ENCODE measurements at regions of chr11 and their contacts with region 1.

Region 1: DNA sequence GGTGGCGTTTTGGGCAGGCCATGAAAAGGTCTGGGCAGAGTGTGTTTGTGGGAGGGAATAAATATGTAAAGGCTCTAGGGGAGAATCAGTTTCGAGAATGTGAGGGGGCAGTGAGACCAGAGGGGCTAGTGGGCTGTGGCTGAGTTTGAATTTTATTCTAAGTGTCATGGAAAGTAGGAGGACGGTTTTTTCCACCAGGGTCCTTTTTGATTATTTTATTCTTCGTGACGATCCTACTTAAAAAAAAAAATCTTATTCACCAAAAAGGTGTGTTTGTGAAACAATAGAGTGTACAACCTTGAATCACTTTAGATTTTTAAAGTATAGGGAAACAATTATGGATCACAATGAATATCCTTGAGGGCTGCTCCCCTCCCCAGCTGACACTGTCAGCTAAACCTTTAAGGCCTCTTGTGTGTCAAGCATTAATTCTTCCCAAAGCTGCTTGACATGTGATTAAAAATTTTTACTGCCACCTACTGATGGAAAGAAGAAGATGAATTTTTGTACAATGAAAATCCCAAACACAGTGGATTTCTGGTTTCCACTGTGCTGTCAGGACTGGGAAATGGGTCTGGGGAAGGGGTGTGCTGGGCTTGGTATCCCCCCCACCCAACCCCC is 107.5 kb upstream of the OR4B1 start:
- DNase-seq: no peak
- H3K4me3 ChIP-seq: peak overlapping the region in 56 of 59 donors; percentile 13 to 69 (median 48)
- H3K27ac ChIP-seq: peak overlapping the region in 58 of 59 donors; percentile 11 to 99 (median 80)
- H3K27me3 ChIP-seq: no peaks in the 10 kb centered on the region
- CTCF ChIP-seq: peak in 53 of 56 donors; percentile 29 to 69 (median 57)

Region 2: GRCh38 chr11:47477323-47477722 is 631.8 kb before region 1 on chr11:
- intact Hi-C with region 1: no loop called
- DNase-seq: no peak
- H3K4me3 ChIP-seq: no peak overlapping the region
- H3K27ac ChIP-seq: peak overlapping the region in 57 of 59 donors; percentile 17 to 87 (median 66)
- H3K27me3 ChIP-seq: no peaks in the 10 kb centered on the region
- CTCF ChIP-seq: no peak

Region 3: DNA sequence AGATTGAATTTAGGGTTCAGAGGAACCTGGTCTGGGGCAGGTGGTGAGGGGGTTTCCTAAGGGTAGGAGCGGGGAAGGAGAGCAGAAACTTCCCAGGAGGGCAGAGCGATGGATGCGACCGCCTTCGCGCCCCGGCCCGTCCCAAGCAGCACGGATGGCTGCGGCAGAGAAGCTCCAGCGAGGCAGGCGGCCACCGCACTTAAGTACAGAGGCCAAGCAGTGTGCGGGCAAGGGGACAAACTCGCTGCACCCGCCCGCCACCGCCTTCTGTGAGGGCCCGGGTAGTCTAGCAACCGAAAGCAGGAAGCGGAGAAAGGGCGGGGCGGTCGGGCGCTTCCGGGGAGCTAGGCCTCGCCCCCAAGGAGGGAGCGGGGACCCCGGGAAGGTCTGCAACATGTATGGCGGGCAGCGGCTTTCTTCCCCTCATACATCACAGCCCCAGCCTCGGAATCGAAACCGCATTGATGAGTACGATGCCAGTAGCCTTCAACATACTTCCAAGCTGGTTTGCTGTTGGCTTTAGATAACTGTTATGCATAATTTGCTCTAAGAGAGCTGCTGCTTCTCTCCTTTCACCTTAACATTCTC is 394.0 kb before region 1 on chr11 and contains the start of gene AGBL2:
- intact Hi-C with region 1: no loop called
- DNase-seq: peak; percentile 39 to 77 (median 56)
- H3K4me3 ChIP-seq: peak within 1 kb of the TSS; percentile 49 to 89 (median 76)
- H3K27ac ChIP-seq: peak within 1 kb of the TSS in 49 of 59 donors; percentile 10 to 86 (median 69)
- H3K27me3 ChIP-seq: no peaks in the 10 kb centered on the region
- CTCF ChIP-seq: peak in 1 of 56 donors; percentile 19
- total RNA-seq, gene AGBL2: 0.17 to 3.9 (median 1.2) TPM in 110 of 120 experiments, not detected in the others

Region 4: GRCh38 chr11:47938791-47939560 is 170.2 kb before region 1 on chr11:
- intact Hi-C with region 1: loop called (anchors 1 to 5 kb)
- DNase-seq: no peak
- H3K4me3 ChIP-seq: no peak overlapping the region
- H3K27ac ChIP-seq: no peak overlapping the region
- H3K27me3 ChIP-seq: no peaks in the 10 kb centered on the region
- CTCF ChIP-seq: no peak

Region 5: DNA sequence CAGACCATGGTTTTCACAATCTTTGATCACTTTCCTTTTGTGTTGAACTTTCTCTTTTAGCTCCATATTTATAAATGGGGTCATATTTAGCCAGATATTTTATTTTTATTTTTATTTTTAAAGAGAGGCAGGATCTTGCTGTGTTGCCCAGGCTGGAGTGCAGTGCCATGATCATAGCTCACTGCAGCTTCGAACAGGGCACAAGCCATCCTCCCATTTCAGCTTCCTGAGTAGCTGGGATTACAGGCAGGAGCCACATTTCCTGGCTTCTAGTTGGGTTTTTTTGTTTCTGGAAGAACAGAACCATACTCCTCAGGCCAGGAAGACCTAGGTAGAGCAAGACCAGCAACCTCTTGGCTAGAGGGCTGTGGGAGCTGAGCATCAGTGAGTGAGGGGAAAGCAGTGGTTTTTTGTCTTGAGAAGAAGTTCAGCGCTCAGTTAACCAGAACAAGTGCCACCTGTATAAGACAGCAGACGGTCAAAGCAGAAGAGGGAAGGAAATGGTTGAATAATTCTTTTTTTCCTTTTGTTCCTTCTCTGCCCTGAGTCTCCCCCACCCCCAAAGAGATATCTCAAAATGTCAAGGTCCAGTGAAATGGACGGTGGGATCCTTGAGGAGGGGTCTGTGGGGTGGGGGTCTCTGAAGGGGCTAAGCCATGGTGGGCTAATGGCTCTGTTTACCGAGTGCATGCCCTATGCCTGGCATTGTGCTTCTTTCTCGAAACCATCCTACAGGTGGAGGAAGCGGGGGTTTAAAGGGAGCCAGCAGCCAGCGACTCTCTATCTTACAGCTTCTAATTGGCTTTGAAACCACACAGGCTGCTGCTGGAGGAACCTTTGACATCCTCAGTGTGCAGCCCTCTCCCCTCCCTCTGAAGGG is 65.8 kb before region 1 on chr11:
- intact Hi-C with region 1: loop called (anchors 2 to 5 kb)
- DNase-seq: no peak
- H3K4me3 ChIP-seq: peak overlapping the region in 22 of 59 donors; percentile 2 to 50 (median 22)
- H3K27ac ChIP-seq: peak overlapping the region; percentile 68 to 99 (median 93)
- H3K27me3 ChIP-seq: no peaks in the 10 kb centered on the region
- CTCF ChIP-seq: no peak

Measured in dorsolateral prefrontal cortex (tissue), 120 donors.